A549 (cell line): ENCODE measurements at regions of chr2 and their contacts with region 1.

Region 1: GRCh38 chr2:236554627-236555282 is 14.9 kb upstream of the ACKR3 start:
- DNase-seq: no peak
- ATAC-seq: no peak
- H3K4me3 ChIP-seq: no peak overlapping the region
- H3K27ac ChIP-seq: no peak overlapping the region
- H3K4me1 ChIP-seq: 0 out of 3 replicates have a peak, but pooled peaks cover 3% of the 10 kb centered on the region
- CTCF ChIP-seq: no peak
- EP300 ChIP-seq: no peak
- POLR2A ChIP-seq: no peak
- RAD21 ChIP-seq: no peak

Region 2: DNA sequence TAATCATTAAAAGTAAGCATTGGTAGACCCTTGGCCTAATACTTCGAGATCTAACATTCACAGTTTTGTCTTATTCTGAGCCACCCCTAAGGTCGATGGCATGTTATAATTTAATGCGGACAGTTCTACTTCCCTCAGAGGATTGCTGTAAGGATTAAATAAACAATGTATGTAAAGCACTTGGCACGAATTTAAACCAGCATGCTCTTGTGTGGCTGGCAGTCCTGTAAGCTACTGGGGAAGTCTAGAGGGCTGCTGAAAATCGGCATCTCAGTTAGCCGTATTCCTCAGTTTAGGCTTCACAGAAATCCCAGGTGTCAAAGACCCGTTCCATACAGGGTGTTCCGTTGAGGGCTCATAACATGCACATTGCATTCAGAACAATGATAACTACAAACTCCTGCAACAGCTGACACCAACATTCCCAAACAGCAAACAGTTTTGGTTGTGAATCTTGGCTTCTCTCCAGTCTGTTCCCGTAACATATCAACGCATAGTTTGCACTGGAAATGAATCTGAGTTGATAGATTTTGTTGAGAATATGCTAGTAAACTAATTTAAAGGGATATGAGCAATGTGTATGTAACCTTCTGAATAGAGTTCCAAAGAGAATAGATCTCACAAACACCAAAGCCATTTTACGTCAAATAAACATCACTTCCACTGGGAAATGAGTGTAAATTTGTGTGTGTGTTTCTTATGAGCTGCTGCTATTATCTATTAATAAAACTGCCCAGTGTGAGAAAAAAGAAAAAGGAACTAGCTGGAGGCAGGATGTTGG is 37.3 kb before region 1 on chr2:
- CTCF ChIA-PET with region 1: no interaction called
- POLR2A ChIA-PET with region 1: no interaction called
- DNase-seq: no peak
- ATAC-seq: no peak
- H3K4me3 ChIP-seq: no peak overlapping the region
- H3K27ac ChIP-seq: no peak overlapping the region
- H3K4me1 ChIP-seq: no peaks in the 10 kb centered on the region
- CTCF ChIP-seq: no peak
- EP300 ChIP-seq: no peak
- POLR2A ChIP-seq: no peak
- RAD21 ChIP-seq: no peak

Region 3: GRCh38 chr2:236569573-236569973 is 14.8 kb after region 1 on chr2 and contains the start of gene ACKR3:
- CTCF ChIA-PET with region 1: interaction called, 16 read pairs
- POLR2A ChIA-PET with region 1: no interaction called
- DNase-seq: peak; percentile 65 to 76
- ATAC-seq: peak; percentile 86 to 93
- H3K4me3 ChIP-seq: peak within 1 kb of the TSS; percentile 43
- H3K27ac ChIP-seq: peak within 1 kb of the TSS; percentile 62 to 90
- H3K4me1 ChIP-seq: peaks cover 10% of the 10 kb centered on the region; the same call in 2 of the 3 replicates
- CTCF ChIP-seq: peak; percentile 59
- EP300 ChIP-seq: no peak
- POLR2A ChIP-seq: peak; percentile 33
- RAD21 ChIP-seq: peak; percentile 59 to 72; a peak in 4 of 5 replicates
- polyA plus RNA-seq, gene ACKR3: 21.3 and 25.0 TPM in 2 replicates